ENCODE measurements at regions of chr5 and their contacts with region 1.

Region 1: GRCh38 chr5:138178516-138179276 is at the starts of genes BRD8 and KIF20A:
- DNase-seq: peak; percentile 73 to 92 (median 83)
- ATAC-seq: peak; percentile 90 to 93 (median 93)
- H3K4me3 ChIP-seq: peak within 1 kb of the TSS; percentile 66 to 97
- H3K4me3 Mint-ChIP-seq: peak within 1 kb of the TSS in 1 of 3 donors; percentile 56
- H3K27ac ChIP-seq: peak within 1 kb of the TSS; percentile 50
- H3K27ac Mint-ChIP-seq: no peak within 1 kb of the TSS
- H3K4me1 ChIP-seq: peaks cover 9 to 21% of the 10 kb centered on the region in 2 experiments
- H3K4me1 Mint-ChIP-seq: peaks cover 9 to 14% (median 10%) of the 10 kb centered on the region in 3 donors
- H3K27me3 ChIP-seq: no peaks in the 10 kb centered on the region
- H3K27me3 Mint-ChIP-seq: no peaks in the 10 kb centered on the region
- total RNA-seq, gene BRD8: 29.5 to 79.5 (median 72.2) TPM
- total RNA-seq, gene KIF20A: 0.32 to 0.67 (median 0.56) TPM

Region 2: DNA sequence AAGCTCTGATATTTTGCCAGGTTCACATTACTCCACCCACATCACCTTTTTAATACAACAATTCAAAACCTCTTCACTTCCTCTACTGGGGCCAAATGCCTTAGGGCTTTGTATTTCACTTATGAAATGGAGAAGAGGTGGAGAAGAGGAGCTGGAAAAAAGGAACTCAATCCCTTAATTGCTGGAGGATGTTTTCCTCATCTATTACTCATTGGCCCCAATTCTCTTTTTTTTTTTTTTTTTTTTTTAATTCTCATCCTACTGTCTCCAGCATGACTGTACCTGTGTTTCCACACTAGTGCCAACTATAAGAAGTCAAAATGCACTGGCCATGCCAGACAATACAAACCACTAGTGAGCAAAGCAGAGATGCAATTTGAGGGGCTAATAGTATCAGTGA is 166.7 kb before region 1 on chr5:
- CTCF ChIA-PET with region 1: no interaction called
- POLR2A ChIA-PET with region 1: no interaction called
- DNase-seq: no peak
- ATAC-seq: no peak
- H3K4me3 ChIP-seq: no peak overlapping the region
- H3K4me3 Mint-ChIP-seq: no peak overlapping the region
- H3K27ac ChIP-seq: no peak overlapping the region
- H3K27ac Mint-ChIP-seq: no peak overlapping the region
- H3K4me1 ChIP-seq: no peaks in the 10 kb centered on the region
- H3K4me1 Mint-ChIP-seq: peaks cover 11 to 14% (median 11%) of the 10 kb centered on the region in 3 donors
- H3K27me3 ChIP-seq: no peaks in the 10 kb centered on the region
- H3K27me3 Mint-ChIP-seq: no peaks in the 10 kb centered on the region

Region 3: GRCh38 chr5:138157626-138158025 is 21.1 kb before region 1 on chr5:
- CTCF ChIA-PET with region 1: interaction called in 1 of 2 experiments, 14 read pairs
- POLR2A ChIA-PET with region 1: no interaction called
- DNase-seq: no peak
- ATAC-seq: no peak
- H3K4me3 ChIP-seq: no peak overlapping the region
- H3K4me3 Mint-ChIP-seq: no peak overlapping the region
- H3K27ac ChIP-seq: no peak overlapping the region
- H3K27ac Mint-ChIP-seq: no peak overlapping the region
- H3K4me1 ChIP-seq: no peaks in the 10 kb centered on the region
- H3K4me1 Mint-ChIP-seq: no peaks in the 10 kb centered on the region
- H3K27me3 ChIP-seq: no peaks in the 10 kb centered on the region
- H3K27me3 Mint-ChIP-seq: no peaks in the 10 kb centered on the region

Measured in T-cell (primary cell).